Testis (tissue), 5 donors: ENCODE measurements at regions of chr9 and their contacts with region 1.

Region 1: GRCh38 chr9:32384364-32385151 is at the start of gene ACO1:
- DNase-seq: peak; percentile 91
- H3K4me3 ChIP-seq: peak within 1 kb of the TSS; percentile 85 to 92
- H3K27ac ChIP-seq: peak within 1 kb of the TSS; percentile 85
- H3K4me1 ChIP-seq: peaks cover 25% of the 10 kb centered on the region
- H3K27me3 ChIP-seq: no peaks in the 10 kb centered on the region
- CTCF ChIP-seq: no peak
- POLR2A ChIP-seq: peak; percentile 85
- total RNA-seq, gene ACO1: 52.0 to 67.6 TPM

Region 2: GRCh38 chr9:32171339-32171738 is 213.2 kb before region 1 on chr9:
- intact Hi-C with region 1: no loop called
- DNase-seq: no peak
- H3K4me3 ChIP-seq: no peak overlapping the region
- H3K27ac ChIP-seq: peak overlapping the region; percentile 24 to 28
- H3K4me1 ChIP-seq: peaks cover 10% of the 10 kb centered on the region
- H3K27me3 ChIP-seq: no peaks in the 10 kb centered on the region
- CTCF ChIP-seq: no peak
- POLR2A ChIP-seq: no peak

Region 3: GRCh38 chr9:32579706-32580331 is 195.3 kb after region 1 on chr9:
- intact Hi-C with region 1: loop called (anchors 5 kb)
- DNase-seq: peak; percentile 88
- H3K4me3 ChIP-seq: no peak overlapping the region
- H3K27ac ChIP-seq: peak overlapping the region in 1 of 2 donors; percentile 15
- H3K4me1 ChIP-seq: peaks cover 5% of the 10 kb centered on the region
- H3K27me3 ChIP-seq: no peaks in the 10 kb centered on the region
- CTCF ChIP-seq: peak; percentile 82 to 91 (median 90)
- POLR2A ChIP-seq: no peak

Region 4: GRCh38 chr9:32627394-32627944 is 242.9 kb after region 1 on chr9:
- intact Hi-C with region 1: no loop called
- DNase-seq: no peak
- H3K4me3 ChIP-seq: no peak overlapping the region
- H3K27ac ChIP-seq: no peak overlapping the region
- H3K4me1 ChIP-seq: no peaks in the 10 kb centered on the region
- H3K27me3 ChIP-seq: no peaks in the 10 kb centered on the region
- CTCF ChIP-seq: no peak
- POLR2A ChIP-seq: no peak